Right ventricle myocardium superior (tissue), 1 donor: ENCODE measurements at regions of chr12 and their contacts with region 1.

Region 1: DNA sequence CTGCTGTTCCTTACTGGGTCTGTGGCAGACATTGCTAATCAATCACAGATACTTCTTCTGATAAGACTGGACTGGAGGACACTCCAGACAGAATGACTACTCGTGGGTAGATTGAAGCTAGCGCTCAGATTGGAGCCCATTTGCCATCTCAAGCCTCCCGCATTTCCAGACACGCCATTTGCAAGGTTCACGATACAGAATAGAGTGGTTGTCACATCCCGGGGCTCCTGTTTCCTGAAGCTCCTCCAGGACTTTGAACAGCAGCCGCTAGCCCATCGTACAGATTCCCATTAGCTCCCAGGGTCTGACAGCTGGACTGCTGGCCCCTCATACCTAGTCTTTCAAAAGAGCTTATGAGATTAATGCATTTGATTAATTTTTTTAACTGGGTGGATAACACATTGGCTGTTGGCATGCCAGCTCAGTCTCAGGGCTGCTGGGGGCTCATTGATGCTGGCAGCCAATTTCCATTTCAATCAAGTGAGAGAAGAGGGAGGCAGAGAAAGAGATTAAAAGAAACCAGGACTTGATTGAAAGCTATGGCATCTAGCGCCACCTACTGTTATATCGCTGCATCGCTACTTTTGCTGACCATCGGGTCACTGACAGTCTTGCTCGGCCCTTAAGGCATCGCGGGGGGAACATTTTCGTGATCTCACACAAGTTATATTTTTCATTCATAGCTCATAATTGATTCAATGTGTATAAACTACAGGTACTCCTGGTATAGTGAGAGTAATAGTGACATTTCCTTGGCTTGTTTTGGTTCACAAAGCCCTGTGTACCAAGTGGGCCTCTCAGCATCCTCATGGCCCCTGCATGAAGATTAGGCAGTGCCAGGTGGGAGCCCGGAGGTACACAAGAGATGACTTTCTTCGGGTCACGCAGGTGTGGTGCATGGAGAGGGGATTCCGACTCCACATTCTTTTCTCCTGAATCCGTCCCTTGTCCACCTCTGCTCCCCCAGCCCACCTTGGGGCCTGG is 78.6 kb downstream of the CCDC60 start:
- DNase-seq: peak; percentile 61
- ATAC-seq: peak; percentile 77

Region 2: GRCh38 chr12:118979763-118980406 is 433.2 kb before region 1 on chr12:
- intact Hi-C with region 1: loop called (anchors 10 kb)
- DNase-seq: peak; percentile 40
- ATAC-seq: peak; percentile 69

Region 3: GRCh38 chr12:119328111-119328510 is 85.0 kb before region 1 on chr12:
- intact Hi-C with region 1: no loop called
- DNase-seq: no peak
- ATAC-seq: peak; percentile 85